ENCODE measurements at regions of chr4 and their contacts with region 1.

Region 1: DNA sequence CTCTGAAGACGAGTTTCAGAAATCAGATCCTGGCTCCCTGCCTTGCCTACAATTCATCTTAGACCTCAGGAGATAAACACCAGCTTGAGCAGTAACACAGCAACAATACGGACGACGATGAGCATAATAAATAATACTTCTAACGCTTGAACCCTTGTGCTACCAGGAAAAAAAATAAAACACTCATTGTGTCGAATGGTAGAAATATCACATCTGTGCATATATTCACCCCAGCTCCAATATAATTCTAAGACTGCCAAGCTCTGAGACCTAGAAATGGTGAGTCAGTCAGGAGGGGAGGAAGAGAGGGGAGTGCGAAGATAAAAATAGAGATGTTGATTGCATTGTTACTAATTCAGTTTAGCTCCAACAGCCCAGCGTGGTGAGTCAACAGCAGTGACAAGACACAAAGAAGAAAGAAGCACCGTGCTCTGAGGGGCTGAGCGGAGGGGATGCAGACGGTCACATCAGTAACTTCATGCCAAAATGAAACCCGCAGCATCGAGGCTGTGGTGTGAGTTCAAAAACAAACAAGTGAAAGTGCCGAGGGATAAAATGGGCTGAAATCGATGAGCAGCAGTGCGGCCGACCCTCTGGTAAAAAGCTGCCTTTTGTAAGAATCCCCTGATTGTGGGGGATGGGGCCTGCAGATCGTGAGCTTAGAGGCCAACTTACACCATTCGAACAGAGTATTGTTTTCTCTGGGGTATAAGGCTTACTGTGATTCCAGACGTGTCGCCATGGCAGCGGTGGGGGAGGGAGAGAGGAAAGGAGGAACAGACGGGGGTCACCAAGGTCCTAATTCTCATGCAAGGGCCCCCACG is 150.4 kb downstream of the MGST2 start:
- DNase-seq: peak; percentile 94
- H3K4me3 ChIP-seq: peak overlapping the region in 2 of 3 experiments; percentile 31 to 53
- H3K27ac ChIP-seq: peak overlapping the region; percentile 61
- H3K4me1 ChIP-seq: peaks cover 22% of the 10 kb centered on the region
- H3K27me3 ChIP-seq: no peaks in the 10 kb centered on the region
- CTCF ChIP-seq: no peak
- POLR2A ChIP-seq: no peak

Region 2: DNA sequence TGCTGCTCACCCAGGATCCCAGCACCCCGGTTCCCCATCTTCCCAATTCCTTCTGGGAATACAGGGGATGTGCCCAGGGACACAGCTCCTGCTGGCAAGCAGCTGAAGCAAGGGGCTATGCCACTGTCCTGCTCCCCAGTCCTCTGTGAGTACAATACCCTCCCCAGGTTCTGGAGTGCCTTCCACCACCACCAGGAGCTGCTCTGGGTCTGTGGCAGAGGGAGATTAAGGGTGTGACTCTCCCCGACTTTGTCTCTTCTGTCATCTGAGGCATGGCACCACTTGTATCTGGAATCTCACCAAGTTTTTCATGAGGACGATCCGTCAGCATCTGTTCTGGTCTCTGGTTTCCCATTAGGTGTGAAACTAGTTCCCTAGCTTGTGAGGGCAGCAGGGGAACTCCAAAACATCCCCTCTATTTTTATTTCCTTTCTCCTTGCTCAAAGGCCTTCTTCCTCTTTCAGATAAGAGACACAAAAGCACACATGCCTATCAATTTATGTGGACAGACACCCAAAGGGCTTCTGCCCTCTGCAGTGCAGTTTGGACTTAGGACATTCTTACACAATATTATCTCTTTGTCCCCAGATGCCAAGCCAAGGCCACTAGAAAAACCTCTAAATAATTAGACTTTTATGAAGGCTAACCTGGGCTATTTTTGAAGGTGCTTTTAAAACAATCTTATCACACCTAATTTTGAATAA is 123.5 kb before region 1 on chr4:
- CTCF ChIA-PET with region 1: no interaction called
- POLR2A ChIA-PET with region 1: no interaction called
- dilution Hi-C with region 1: no loop called
- intact Hi-C with region 1: no loop called
- DNase-seq: peak; percentile 12
- H3K4me3 ChIP-seq: no peak overlapping the region
- H3K27ac ChIP-seq: no peak overlapping the region
- H3K4me1 ChIP-seq: no peaks in the 10 kb centered on the region
- H3K27me3 ChIP-seq: no peaks in the 10 kb centered on the region
- CTCF ChIP-seq: peak in 1 of 2 donors; percentile 21
- POLR2A ChIP-seq: no peak

Region 3: GRCh38 chr4:139866276-139866962 is 50.4 kb after region 1 on chr4:
- CTCF ChIA-PET with region 1: no interaction called
- POLR2A ChIA-PET with region 1: no interaction called
- dilution Hi-C with region 1: no loop called
- intact Hi-C with region 1: loop called (anchors 2 kb)
- DNase-seq: no peak
- H3K4me3 ChIP-seq: no peak overlapping the region
- H3K27ac ChIP-seq: no peak overlapping the region
- H3K4me1 ChIP-seq: peaks cover 8% of the 10 kb centered on the region
- H3K27me3 ChIP-seq: no peaks in the 10 kb centered on the region
- CTCF ChIP-seq: no peak
- POLR2A ChIP-seq: no peak

Region 4: DNA sequence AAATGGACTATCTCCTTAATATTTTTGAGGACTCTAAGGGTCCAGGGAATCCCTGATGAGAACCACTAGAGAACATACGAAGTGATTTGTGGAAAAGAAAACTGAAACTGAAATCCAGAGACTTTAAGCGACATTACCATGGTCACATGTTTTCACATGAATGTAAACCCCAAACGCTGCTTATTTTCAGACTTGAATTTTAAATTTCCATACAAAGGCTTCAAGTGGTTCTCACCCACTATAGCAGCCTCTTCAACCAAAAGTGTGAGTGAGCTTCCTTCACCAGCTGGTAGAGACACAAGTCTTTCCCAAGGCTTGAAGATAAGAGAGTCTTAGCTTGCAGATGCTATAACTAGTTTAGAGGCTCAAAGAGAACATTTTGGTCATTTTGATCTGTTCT is 82.3 kb after region 1 on chr4:
- CTCF ChIA-PET with region 1: no interaction called
- POLR2A ChIA-PET with region 1: no interaction called
- dilution Hi-C with region 1: no loop called
- intact Hi-C with region 1: no loop called
- DNase-seq: no peak
- H3K4me3 ChIP-seq: no peak overlapping the region
- H3K27ac ChIP-seq: no peak overlapping the region
- H3K4me1 ChIP-seq: peaks cover 23% of the 10 kb centered on the region
- H3K27me3 ChIP-seq: no peaks in the 10 kb centered on the region
- CTCF ChIP-seq: no peak
- POLR2A ChIP-seq: no peak

Region 5: DNA sequence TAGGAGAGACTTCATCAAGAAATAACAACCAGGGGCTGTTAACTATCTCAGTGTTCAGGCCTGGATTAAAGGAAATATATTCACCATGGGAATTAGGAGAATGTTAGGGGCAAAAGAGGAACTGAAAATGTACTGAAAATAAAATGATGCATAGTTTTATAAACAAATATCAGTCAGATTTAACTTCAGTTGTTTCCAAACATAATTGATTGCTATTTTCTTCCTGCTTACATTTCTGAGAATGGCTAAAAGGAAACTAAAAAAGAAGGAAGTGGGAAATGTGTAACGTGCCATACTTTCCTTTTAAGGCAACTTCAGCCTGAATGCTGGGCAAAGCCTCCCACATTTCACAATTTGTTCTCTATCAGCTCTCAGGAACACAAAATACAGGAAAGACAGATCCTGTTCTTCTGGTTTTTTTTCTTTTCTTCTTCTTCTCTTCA is 159.9 kb after region 1 on chr4:
- CTCF ChIA-PET with region 1: no interaction called
- POLR2A ChIA-PET with region 1: no interaction called
- dilution Hi-C with region 1: no loop called
- intact Hi-C with region 1: loop called (anchors 1 kb)
- DNase-seq: peak; percentile 68
- H3K4me3 ChIP-seq: no peak overlapping the region
- H3K27ac ChIP-seq: peak overlapping the region; percentile 15
- H3K4me1 ChIP-seq: peaks cover 27% of the 10 kb centered on the region
- H3K27me3 ChIP-seq: no peaks in the 10 kb centered on the region
- CTCF ChIP-seq: no peak
- POLR2A ChIP-seq: no peak

Region 6: DNA sequence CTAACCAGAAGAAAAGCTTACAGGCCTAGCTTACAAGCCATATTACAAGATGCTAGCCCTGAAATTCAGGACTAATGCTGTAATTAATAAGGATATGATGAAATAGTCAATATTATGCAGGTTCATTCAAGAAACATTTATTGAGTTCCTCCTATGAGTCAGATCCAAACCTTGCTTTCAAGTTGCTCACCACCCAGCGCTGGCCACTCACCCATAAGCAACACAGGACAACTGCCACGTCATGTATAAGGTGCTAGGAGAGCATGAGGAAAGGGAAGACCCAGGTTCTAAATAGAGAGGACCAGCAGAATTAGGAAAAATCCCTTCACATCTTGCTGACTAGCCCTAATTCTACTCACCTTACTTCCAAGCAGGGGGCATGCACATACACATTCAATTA is 314.7 kb after region 1 on chr4:
- CTCF ChIA-PET with region 1: no interaction called
- POLR2A ChIA-PET with region 1: no interaction called
- dilution Hi-C with region 1: no loop called
- intact Hi-C with region 1: no loop called
- DNase-seq: no peak
- H3K4me3 ChIP-seq: no peak overlapping the region
- H3K27ac ChIP-seq: no peak overlapping the region
- H3K4me1 ChIP-seq: peaks cover 8% of the 10 kb centered on the region
- H3K27me3 ChIP-seq: no peaks in the 10 kb centered on the region
- CTCF ChIP-seq: no peak
- POLR2A ChIP-seq: no peak

Measured in endothelial cell of umbilical vein (primary cell).